ENCODE measurements at regions of chr17 and their contacts with region 1.

Region 1: GRCh38 chr17:7823581-7824397 is 10.2 kb upstream of the KDM6B start:
- DNase-seq: no peak
- ATAC-seq: no peak
- H3K4me3 ChIP-seq: no peak overlapping the region
- H3K27ac ChIP-seq: no peak overlapping the region
- H3K4me1 ChIP-seq: no peaks in the 10 kb centered on the region
- H3K27me3 ChIP-seq: no peaks in the 10 kb centered on the region
- CTCF ChIP-seq: no peak

Region 2: DNA sequence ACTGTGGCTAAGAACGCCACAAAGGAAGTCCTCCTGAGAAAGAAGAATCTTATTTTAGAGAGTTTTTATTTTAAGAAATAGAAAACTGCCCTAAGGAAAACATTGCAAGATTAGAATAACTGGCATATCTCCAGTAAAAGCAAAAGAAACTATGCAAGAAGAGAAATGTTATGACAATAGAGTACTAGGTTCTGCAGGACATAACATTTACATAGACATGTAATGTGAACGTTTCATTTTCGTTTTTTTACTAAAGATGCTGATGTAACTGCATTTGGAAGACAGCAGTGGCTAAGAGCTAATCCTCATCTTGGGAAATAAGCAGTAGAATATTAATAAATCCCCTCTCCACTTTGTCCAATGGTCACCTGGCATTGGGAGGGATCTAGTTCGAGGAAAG is 701.4 kb before region 1 on chr17:
- CTCF ChIA-PET with region 1: no interaction called
- POLR2A ChIA-PET with region 1: no interaction called
- intact Hi-C with region 1: no loop called
- DNase-seq: no peak
- ATAC-seq: no peak
- H3K4me3 ChIP-seq: no peak overlapping the region
- H3K27ac ChIP-seq: no peak overlapping the region
- H3K4me1 ChIP-seq: no peaks in the 10 kb centered on the region
- H3K27me3 ChIP-seq: no peaks in the 10 kb centered on the region
- CTCF ChIP-seq: no peak

Region 3: GRCh38 chr17:7745748-7746470 is 77.9 kb before region 1 on chr17:
- CTCF ChIA-PET with region 1: no interaction called
- POLR2A ChIA-PET with region 1: no interaction called
- intact Hi-C with region 1: loop called (anchors 5 kb)
- DNase-seq: peak; percentile 82
- ATAC-seq: peak; percentile 42
- H3K4me3 ChIP-seq: no peak overlapping the region
- H3K27ac ChIP-seq: peak overlapping the region; percentile 12; the same call in 1 of the 2 replicates
- H3K4me1 ChIP-seq: peaks cover 34% of the 10 kb centered on the region
- H3K27me3 ChIP-seq: no peaks in the 10 kb centered on the region
- CTCF ChIP-seq: peak; percentile 35; the same call in 1 of the 2 replicates

Region 4: DNA sequence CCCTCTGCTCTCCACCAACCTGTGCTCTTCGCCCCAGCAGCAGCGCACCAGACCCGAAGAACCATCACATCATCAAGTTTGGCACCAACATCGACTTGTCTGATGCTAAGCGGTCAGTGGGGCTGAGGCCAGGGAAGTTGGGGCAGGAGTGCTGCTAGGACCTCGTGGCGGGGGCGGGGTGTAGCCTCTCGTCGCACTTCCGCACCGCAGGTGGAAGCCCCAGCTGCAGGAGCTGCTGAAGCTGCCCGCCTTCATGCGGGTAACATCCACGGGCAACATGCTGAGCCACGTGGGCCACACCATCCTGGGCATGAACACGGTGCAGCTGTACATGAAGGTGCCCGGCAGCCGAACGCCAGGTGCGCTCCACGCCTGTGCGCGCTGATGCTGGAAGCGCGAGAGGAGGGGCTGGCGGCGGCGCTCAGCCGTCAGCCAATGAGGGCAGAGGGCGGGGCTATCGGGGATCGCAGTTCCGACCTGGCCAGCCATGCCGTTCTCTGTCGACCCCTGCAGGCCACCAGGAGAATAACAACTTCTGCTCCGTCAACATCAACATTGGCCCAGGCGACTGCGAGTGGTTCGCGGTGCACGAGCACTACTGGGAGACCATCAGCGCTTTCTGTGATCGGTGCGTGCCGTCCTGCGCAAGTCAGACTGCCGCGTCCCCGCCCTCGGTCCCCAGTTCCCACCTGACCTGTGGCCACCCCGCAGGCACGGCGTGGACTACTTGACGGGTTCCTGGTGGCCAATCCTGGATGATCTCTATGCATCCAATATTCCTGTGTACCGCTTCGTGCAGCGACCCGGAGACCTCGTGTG is 27.9 kb after region 1 on chr17:
- CTCF ChIA-PET with region 1: interaction called, 4 read pairs
- POLR2A ChIA-PET with region 1: no interaction called
- intact Hi-C with region 1: loop called (anchors 1 kb)
- DNase-seq: peak; percentile 87
- ATAC-seq: peak; percentile 85
- H3K4me3 ChIP-seq: peak overlapping the region; percentile 43
- H3K27ac ChIP-seq: no peak overlapping the region
- H3K4me1 ChIP-seq: peaks cover 18% of the 10 kb centered on the region
- H3K27me3 ChIP-seq: no peaks in the 10 kb centered on the region
- CTCF ChIP-seq: peak; percentile 74

Measured in PC-3 (cell line).